MCF 10A (cell line): ENCODE measurements at regions of chr2 and their contacts with region 1.

Region 1: DNA sequence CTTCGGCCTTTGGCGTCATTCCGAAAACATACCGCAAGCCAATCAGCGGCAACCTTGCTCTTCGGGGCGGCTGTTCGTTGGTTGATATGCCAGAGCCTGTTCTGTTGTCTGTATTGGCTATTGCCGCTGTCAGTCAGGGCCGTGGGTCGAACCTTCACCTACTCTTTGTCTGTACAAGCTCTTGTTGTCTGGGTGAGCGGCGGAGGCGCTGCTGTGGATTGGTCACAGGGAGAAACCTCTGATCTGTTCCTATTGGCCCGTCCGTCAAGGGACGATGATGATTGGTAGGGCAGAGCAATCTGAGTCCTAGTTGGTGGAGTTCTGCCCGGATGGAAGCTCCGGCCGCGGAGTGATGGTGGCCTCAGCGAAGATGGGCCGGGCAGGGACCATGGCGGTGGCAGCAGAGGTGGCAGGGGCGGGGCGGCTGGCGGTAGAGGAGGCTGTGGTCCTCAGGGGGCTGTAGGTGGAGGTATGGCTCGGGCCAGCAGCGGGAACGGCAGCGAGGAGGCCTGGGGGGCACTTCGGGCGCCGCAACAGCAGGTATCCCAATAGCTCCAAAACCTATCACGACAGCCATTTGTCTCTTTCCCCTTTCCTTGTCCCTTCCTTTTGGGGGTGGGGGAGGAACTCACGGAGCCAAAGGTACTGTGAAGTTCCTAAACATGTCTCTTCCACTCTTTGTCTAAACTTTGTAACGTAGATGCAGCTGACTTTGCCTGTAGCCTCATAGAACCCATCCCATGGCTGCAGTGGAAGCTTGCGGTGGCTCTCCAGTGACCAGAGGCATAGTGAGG is at the start of gene WBP1:
- DNase-seq: peak; percentile 100
- H3K4me3 Mint-ChIP-seq: peak within 1 kb of the TSS; percentile 98
- H3K27ac Mint-ChIP-seq: peak within 1 kb of the TSS; percentile 91
- H3K4me1 Mint-ChIP-seq: peaks cover 50% of the 10 kb centered on the region
- H3K27me3 Mint-ChIP-seq: no peaks in the 10 kb centered on the region
- CTCF ChIP-seq: no peak
- total RNA-seq, gene WBP1: 45.7 and 46.5 TPM in 2 replicates

Region 2: DNA sequence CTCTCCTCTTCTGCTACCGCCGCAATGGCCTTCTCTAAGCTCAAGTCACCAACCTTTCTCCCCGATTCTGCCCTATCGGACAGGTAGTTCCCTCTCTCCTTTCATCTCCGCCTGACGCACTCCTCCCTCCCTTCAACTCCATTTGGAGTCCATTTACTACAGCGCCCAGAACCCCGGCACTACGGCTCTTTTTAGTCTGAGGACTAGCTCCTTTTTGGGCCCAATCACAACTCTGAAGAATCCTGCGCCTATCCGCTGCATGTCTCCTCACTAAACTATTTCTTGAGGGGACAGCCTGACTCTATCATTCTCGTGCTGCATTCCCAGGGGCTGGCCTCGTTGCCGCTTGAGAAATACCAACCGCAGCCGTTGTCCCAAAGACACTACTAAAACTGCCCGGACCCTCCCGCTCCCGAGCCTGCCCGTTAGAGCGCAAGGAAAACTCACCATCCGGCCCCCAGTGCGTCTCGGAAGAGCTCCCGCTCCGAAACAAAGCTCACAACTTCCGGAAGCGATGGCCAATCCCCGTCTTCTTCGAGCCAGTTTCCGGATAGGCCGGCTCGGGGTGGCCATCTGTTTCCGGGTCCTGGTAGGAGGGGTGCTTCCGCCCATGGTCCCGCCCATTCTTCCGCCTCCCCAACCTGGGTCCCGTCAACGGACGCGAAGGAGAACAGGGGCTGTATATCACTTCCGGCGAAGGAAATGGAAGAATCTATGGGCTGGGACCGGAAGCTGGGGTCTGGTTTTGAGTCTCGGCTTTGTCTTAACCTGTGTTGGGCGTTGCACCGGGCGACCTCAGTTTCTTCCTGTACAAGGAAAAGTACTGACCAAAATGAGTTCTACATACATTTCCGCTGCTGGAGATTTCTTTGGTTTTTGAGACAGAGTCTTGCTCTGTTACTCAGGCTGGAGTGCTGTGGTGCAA is 721.2 kb before region 1 on chr2 and contains the start of gene TPRKB:
- CTCF ChIA-PET with region 1: no interaction called
- POLR2A ChIA-PET with region 1: interaction called, 11 read pairs
- intact Hi-C with region 1: no loop called
- DNase-seq: peak; percentile 98
- H3K4me3 Mint-ChIP-seq: peak within 1 kb of the TSS; percentile 86
- H3K27ac Mint-ChIP-seq: peak within 1 kb of the TSS; percentile 92
- H3K4me1 Mint-ChIP-seq: peaks cover 11% of the 10 kb centered on the region
- H3K27me3 Mint-ChIP-seq: no peaks in the 10 kb centered on the region
- CTCF ChIP-seq: no peak
- total RNA-seq, gene TPRKB: 40.4 and 51.0 TPM in 2 replicates

Region 3: GRCh38 chr2:74383254-74383653 is 75.1 kb before region 1 on chr2:
- CTCF ChIA-PET with region 1: no interaction called
- POLR2A ChIA-PET with region 1: no interaction called
- intact Hi-C with region 1: no loop called
- DNase-seq: peak; percentile 66
- H3K4me3 Mint-ChIP-seq: no peak overlapping the region
- H3K27ac Mint-ChIP-seq: peak overlapping the region; percentile 1
- H3K4me1 Mint-ChIP-seq: peaks cover 34% of the 10 kb centered on the region
- H3K27me3 Mint-ChIP-seq: no peaks in the 10 kb centered on the region
- CTCF ChIP-seq: no peak

Region 4: DNA sequence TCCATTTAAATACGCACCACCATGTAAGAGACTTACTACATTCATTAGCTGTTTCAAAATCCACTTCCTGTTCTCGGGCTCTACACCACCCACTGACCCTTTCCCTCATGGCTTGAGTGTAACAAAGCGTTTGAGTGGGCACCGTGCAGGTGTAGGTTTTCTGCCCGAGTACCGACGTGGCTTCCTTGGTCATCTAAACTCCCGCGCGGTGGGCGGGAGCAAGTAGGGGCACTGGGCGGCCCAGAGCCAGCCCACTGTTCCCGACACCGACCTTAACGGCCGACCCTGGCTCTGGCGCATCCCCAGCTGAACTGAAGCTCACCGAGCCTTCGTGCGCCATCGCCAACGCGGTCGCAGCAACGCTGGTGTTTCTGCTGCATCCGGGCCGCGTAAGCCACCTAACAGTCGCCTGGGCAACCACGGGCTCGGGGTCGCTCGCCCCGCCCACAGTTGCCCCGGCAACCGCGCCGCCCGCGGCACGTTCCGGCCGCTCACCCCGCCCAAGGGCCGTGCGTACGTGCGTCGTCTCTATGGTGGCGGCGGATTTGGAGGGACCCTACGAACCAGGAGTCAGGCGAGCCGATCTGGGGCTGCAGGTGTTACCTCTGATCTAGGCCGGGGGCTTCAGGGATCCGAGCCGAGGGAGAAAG is 37.0 kb before region 1 on chr2 and contains the starts of genes C2orf81 and WDR54:
- CTCF ChIA-PET with region 1: interaction called, 3 read pairs
- POLR2A ChIA-PET with region 1: interaction called, 20 read pairs
- intact Hi-C with region 1: loop called (anchors 1 kb)
- DNase-seq: peak; percentile 78
- H3K4me3 Mint-ChIP-seq: peak within 1 kb of the TSS; percentile 87
- H3K27ac Mint-ChIP-seq: peak within 1 kb of the TSS; percentile 82
- H3K4me1 Mint-ChIP-seq: peaks cover 33% of the 10 kb centered on the region
- H3K27me3 Mint-ChIP-seq: no peaks in the 10 kb centered on the region
- CTCF ChIP-seq: no peak
- total RNA-seq, gene C2orf81: 4.3 and 5.6 TPM in 2 replicates
- total RNA-seq, gene WDR54: 16.4 and 19.9 TPM in 2 replicates

Region 5: GRCh38 chr2:74472086-74472944 is 14.0 kb after region 1 on chr2 and contains the start of gene MRPL53:
- CTCF ChIA-PET with region 1: interaction called, 5 read pairs
- POLR2A ChIA-PET with region 1: interaction called, 84 read pairs
- intact Hi-C with region 1: no loop called
- DNase-seq: peak; percentile 91
- H3K4me3 Mint-ChIP-seq: peak within 1 kb of the TSS; percentile 94
- H3K27ac Mint-ChIP-seq: peak within 1 kb of the TSS; percentile 97
- H3K4me1 Mint-ChIP-seq: peaks cover 8% of the 10 kb centered on the region
- H3K27me3 Mint-ChIP-seq: no peaks in the 10 kb centered on the region
- CTCF ChIP-seq: no peak
- total RNA-seq, gene MRPL53: 115 and 123 TPM in 2 replicates

Region 6: GRCh38 chr2:74507145-74507925 is 49.0 kb after region 1 on chr2 and contains the start of gene PCGF1:
- CTCF ChIA-PET with region 1: interaction called, 4 read pairs
- POLR2A ChIA-PET with region 1: interaction called, 12 read pairs
- intact Hi-C with region 1: no loop called
- DNase-seq: peak; percentile 98
- H3K4me3 Mint-ChIP-seq: peak within 1 kb of the TSS; percentile 88
- H3K27ac Mint-ChIP-seq: peak within 1 kb of the TSS; percentile 98
- H3K4me1 Mint-ChIP-seq: peaks cover 28% of the 10 kb centered on the region
- H3K27me3 Mint-ChIP-seq: no peaks in the 10 kb centered on the region
- CTCF ChIP-seq: no peak
- total RNA-seq, gene PCGF1: 37.5 and 41.6 TPM in 2 replicates

Region 7: DNA sequence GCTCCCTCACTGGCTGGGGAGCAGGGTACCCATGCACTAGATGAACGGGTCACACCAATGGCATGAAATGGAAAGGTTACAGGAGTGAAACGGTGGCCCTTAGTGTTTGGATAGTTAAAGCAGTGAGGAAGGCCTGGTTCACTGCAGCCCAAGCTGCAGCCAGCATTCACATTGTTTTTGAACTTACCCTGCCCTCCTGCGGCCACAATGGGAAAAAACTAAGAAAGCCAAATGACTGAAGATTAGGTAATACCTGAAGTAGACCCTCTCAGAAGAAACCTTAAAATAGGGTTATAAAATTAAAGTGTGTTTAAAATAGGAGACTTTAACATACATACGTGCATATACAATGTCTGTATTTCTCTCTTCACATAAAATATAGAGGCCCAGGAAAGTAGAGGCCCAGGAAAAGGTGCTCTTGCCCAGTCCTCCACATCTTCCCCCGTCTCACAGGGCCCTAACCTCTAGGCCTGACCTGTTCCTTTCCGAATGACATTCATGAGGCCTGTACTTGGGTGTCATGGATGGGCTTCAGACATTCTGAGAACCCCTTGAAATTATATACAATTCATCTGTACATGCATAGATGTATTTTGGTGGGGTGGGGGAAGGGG is 129.4 kb after region 1 on chr2:
- CTCF ChIA-PET with region 1: interaction called, 10 read pairs
- POLR2A ChIA-PET with region 1: interaction called, 4 read pairs
- intact Hi-C with region 1: no loop called
- DNase-seq: peak; percentile 78
- H3K4me3 Mint-ChIP-seq: no peak overlapping the region
- H3K27ac Mint-ChIP-seq: no peak overlapping the region
- H3K4me1 Mint-ChIP-seq: peaks cover 8% of the 10 kb centered on the region
- H3K27me3 Mint-ChIP-seq: peaks cover 4% of the 10 kb centered on the region
- CTCF ChIP-seq: peak; percentile 71

Region 8: DNA sequence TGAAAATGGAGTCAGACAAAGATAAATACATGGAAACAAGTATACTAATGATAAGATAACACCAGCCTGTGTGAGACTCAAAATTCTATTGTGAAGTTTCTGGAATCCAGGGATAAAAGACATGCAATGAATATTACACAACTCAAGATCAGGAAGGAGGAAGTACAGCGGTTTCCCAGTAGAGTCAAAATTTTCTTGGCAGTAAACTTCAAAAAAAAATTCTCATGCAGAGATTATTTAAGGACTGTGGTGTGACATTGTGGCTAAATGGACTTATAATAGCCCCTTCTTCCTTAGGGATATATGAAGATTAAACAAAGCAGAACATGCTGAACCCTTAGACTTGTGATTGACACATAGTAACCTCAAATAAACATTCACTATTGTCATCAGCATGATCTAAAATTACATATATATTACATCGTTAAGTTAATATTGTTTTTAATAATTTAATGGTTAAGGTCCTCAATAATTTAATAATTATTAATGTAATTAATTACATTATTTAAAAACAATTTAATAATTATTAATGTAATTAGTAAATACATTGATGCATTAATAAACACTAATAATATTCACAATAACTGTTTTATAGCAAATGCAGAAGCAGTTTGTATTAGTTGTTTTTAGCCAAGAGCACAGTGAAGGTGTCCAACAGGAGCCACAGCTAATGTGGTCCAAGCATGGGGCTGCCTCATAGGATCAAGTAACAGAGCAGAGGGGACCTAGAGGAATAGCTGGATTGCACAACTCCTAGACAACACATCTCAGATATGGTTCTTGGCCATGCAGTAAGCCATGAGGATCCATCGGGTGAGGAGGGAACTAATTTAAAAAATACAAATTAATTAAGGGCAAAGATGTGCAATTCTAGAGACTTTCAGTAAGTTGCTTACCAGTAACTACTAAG is 577.4 kb after region 1 on chr2:
- CTCF ChIA-PET with region 1: no interaction called
- POLR2A ChIA-PET with region 1: no interaction called
- intact Hi-C with region 1: no loop called
- DNase-seq: peak; percentile 17
- H3K4me3 Mint-ChIP-seq: no peak overlapping the region
- H3K27ac Mint-ChIP-seq: no peak overlapping the region
- H3K4me1 Mint-ChIP-seq: no peaks in the 10 kb centered on the region
- H3K27me3 Mint-ChIP-seq: no peaks in the 10 kb centered on the region
- CTCF ChIP-seq: no peak